Activated naive CD4-positive, alpha-beta T cell treated with anti-CD3 and anti-CD28 coated beads for 36 hours (primary cell): ENCODE measurements at regions of chr15 and their contacts with region 1.

Region 1: DNA sequence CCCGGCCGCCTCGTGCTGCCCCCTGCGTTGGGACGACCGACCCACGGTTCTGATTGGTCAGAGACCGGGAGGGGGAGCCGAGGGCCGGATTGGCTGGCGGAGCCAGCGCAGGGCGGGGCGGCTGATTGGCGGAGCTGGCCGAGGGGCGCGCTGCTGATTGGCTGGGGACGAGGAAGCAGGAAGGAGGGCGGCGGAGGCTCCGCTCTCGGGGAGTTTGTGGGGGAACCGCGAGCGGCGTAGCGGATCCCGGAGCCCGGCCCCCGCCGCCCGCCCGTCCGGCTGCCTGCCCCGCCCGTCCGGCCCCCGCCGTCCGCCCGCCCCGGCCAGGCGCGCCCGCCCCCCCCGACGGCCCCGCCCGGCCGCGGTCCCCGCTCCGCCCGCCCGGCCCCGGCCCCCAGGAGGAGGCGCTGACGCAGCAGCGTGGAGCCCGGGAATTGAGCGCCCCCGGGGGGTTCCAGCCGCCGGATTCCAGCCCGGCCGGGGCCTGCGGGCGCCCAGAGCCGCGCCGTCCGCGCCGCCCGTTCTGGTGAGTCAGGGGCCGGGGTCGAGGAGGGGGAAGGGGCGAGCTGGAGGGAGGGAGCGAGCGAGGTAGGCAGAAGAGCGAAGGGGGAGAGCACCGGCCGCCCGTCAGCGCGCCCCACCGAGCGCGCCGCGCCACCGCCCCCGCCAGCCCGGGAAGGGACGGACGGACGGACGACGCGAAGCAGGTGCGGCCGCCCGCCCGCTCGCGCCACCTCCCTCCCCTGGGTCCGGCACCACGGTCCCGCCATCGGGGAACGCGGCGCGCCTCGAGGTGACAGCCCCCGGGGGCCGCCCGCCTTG is at the start of gene BAHD1:
- DNase-seq: peak; percentile 96
- H3K4me3 Mint-ChIP-seq: peak within 1 kb of the TSS; percentile 88
- H3K27ac Mint-ChIP-seq: peak within 1 kb of the TSS; percentile 54
- H3K4me1 Mint-ChIP-seq: peaks cover 60% of the 10 kb centered on the region
- H3K27me3 Mint-ChIP-seq: peaks cover 36% of the 10 kb centered on the region
- total RNA-seq, gene BAHD1: 9.9 to 11.7 TPM

Region 2: GRCh38 chr15:40452296-40453090 is 11.5 kb after region 1 on chr15:
- CTCF ChIA-PET with region 1: interaction called, 8 read pairs
- intact Hi-C with region 1: loop called (anchors 1 kb)
- DNase-seq: peak; percentile 39
- H3K4me3 Mint-ChIP-seq: no peak overlapping the region
- H3K27ac Mint-ChIP-seq: peak overlapping the region; percentile 33
- H3K4me1 Mint-ChIP-seq: peaks cover 83% of the 10 kb centered on the region
- H3K27me3 Mint-ChIP-seq: no peaks in the 10 kb centered on the region

Region 3: DNA sequence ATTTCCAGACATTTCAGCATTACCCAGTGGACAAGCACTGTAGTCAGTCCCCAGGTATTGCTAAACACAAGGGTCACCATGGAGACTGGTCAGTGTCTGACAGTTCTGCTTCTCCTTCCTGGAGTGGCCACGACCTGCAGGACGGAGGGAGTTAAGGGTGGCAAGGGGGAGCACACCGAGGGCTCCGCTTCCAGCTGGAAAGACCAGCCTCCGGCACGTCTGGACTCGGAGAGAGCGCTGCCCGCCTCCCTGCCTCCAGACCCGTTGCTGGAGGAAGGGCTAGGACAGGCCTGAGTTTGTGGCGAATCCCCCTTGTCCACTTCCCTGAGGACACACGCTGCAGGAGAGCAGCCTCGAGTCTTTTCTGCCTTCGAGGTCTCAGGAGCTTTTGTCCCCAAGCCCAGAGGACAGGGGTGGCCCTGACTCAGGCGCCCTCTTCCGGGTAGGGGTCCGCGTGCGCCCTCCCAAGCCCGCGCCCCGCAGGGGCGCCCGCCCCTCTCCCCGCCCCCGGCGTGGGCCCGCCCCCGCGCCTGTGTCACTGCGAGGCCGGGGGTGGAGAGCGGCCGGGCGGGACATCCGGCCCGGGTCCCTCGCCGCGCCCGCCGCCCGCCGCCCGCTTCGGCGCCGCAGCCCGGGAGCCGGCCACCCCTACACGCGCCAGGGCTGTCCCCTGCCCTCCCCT is 29.6 kb after region 1 on chr15 and contains the start of gene CHST14:
- CTCF ChIA-PET with region 1: interaction called, 5 read pairs
- intact Hi-C with region 1: loop called (anchors 2 kb)
- DNase-seq: peak; percentile 43
- H3K4me3 Mint-ChIP-seq: peak within 1 kb of the TSS; percentile 83
- H3K27ac Mint-ChIP-seq: peak within 1 kb of the TSS; percentile 25
- H3K4me1 Mint-ChIP-seq: peaks cover 28% of the 10 kb centered on the region
- H3K27me3 Mint-ChIP-seq: no peaks in the 10 kb centered on the region
- total RNA-seq, gene CHST14: 4.4 to 4.6 TPM

Region 4: DNA sequence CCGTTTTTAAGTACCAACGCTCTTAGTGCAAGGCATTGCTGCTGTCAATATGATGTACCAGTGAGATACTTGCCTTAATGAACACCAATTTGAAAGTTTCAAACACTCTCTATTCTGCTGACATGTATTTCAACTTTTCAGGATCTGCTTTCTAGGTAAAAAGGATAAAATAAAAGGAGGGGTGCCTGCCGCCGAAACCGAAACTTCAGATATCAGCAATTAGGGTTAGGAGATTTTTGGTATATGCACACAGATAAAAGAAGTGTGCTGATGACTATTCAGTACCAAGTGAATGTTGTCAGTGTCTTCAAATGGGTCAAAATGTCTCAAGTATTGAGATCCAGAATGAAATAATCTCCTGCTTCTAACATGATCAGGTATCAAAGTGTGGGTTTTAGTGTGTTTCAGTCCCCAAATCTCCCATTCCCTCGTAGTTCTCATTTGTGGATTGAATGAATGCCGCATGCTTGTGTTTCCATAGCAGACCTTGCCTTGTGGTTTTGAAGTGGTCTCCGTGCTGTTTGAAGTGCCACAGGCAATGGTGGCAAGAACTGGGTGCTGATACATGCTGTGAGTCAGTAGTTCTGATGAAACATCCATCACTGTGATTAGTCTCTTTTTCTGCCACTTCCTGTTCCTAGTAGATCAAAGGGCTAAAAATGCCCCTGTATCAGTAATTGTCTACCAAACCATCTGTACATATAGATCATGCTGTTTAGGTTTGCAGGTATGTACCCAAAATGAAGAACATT is 52.3 kb after region 1 on chr15:
- CTCF ChIA-PET with region 1: interaction called, 3 read pairs
- intact Hi-C with region 1: loop called (anchors 1 kb)
- DNase-seq: peak; percentile 83
- H3K4me3 Mint-ChIP-seq: peak overlapping the region; percentile 4
- H3K27ac Mint-ChIP-seq: peak overlapping the region; percentile 14
- H3K4me1 Mint-ChIP-seq: peaks cover 28% of the 10 kb centered on the region
- H3K27me3 Mint-ChIP-seq: peaks cover under 1% of the 10 kb centered on the region

Region 5: GRCh38 chr15:40506964-40507571 is 66.1 kb after region 1 on chr15:
- CTCF ChIA-PET with region 1: interaction called, 21 read pairs
- intact Hi-C with region 1: loop called (anchors 1 kb)
- DNase-seq: peak; percentile 75
- H3K4me3 Mint-ChIP-seq: no peak overlapping the region
- H3K27ac Mint-ChIP-seq: no peak overlapping the region
- H3K4me1 Mint-ChIP-seq: peaks cover 9% of the 10 kb centered on the region
- H3K27me3 Mint-ChIP-seq: peaks cover 34% of the 10 kb centered on the region

Region 6: GRCh38 chr15:40564591-40565332 is 123.8 kb after region 1 on chr15 and contains the start of gene CCDC32:
- CTCF ChIA-PET with region 1: interaction called, 4 read pairs
- intact Hi-C with region 1: loop called (anchors 2 kb)
- DNase-seq: peak; percentile 98
- H3K4me3 Mint-ChIP-seq: peak within 1 kb of the TSS; percentile 96
- H3K27ac Mint-ChIP-seq: peak within 1 kb of the TSS; percentile 90
- H3K4me1 Mint-ChIP-seq: peaks cover 45% of the 10 kb centered on the region
- H3K27me3 Mint-ChIP-seq: no peaks in the 10 kb centered on the region
- total RNA-seq, gene CCDC32: 25.4 to 25.8 TPM